ENCODE measurements at regions of chr20 and their contacts with region 1.

Region 1: DNA sequence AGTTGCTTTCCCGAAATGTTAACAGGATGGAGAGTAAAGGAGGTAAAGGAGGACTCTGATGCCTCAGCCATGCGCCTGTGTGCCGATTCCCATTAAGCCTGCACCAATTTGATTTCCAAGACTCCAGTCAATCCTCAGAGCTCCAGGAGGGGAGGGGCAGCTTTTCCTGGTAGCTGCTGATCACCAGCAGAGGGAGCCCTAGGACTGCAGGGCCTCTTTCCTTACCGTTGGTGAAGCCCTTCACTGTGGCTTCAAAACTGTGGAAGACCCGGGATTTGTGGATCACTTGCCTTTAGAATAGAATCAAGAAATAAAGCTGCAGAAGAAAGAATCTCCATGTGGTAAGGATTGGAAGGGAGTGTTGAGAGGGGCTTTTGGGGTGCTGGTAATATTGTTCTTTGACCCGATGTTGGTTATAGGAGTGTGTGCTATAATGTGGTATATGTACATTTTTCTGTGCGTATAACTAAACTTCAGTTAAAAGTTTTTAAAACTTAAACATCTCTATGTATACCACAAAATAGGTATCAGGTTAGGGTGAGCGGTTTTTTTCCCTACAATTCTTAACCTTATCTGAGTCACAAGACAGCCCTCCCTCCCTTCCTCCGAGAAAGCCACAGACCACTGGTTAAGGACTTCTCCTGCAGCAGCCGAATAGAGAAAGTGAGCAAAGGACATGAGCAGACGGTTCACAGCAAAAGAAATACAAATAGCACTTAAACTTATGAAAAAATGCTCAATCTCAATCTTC is 6.9 kb upstream of the OSER1 start:
- DNase-seq: peak; percentile 44
- CTCF ChIP-seq: peak; percentile 91

Region 2: GRCh38 chr20:44187051-44187762 is 30.3 kb before region 1 on chr20 and contains the start of gene JPH2:
- CTCF ChIA-PET with region 1: interaction called, 11 read pairs
- POLR2A ChIA-PET with region 1: no interaction called
- DNase-seq: no peak
- CTCF ChIP-seq: no peak

Region 3: GRCh38 chr20:44234566-44235317 is 17.2 kb after region 1 on chr20:
- CTCF ChIA-PET with region 1: interaction called, 12 read pairs
- POLR2A ChIA-PET with region 1: no interaction called
- DNase-seq: no peak
- CTCF ChIP-seq: no peak

Region 4: GRCh38 chr20:44288252-44288651 is 70.7 kb after region 1 on chr20:
- CTCF ChIA-PET with region 1: interaction called, 19 read pairs
- POLR2A ChIA-PET with region 1: no interaction called
- DNase-seq: no peak
- CTCF ChIP-seq: no peak

Region 5: GRCh38 chr20:44319756-44320422 is 102.4 kb after region 1 on chr20:
- CTCF ChIA-PET with region 1: interaction called, 371 read pairs
- POLR2A ChIA-PET with region 1: no interaction called
- DNase-seq: no peak
- CTCF ChIP-seq: no peak

Region 6: DNA sequence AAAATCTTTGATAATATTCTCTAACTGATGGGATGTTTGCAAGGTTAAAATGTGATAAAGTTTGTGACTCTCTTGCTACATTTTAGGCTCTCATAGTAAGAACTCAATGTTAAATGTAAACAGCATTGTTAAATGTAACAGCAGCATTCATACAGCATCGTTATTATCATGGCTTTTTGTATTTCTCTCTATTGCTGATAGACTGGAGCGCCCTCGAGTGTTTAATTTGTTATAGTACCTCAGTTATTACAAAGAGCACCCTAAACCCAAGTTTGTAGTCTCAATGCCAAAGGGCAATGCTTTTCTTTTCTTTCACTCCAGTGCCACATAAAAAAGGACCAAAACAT is 243.3 kb after region 1 on chr20:
- CTCF ChIA-PET with region 1: interaction called, 20 read pairs
- POLR2A ChIA-PET with region 1: no interaction called
- DNase-seq: no peak
- CTCF ChIP-seq: peak; percentile 21

Measured in GM10248 (cell line).